ENCODE measurements at regions of chr14 and their contacts with region 1.

Region 1: DNA sequence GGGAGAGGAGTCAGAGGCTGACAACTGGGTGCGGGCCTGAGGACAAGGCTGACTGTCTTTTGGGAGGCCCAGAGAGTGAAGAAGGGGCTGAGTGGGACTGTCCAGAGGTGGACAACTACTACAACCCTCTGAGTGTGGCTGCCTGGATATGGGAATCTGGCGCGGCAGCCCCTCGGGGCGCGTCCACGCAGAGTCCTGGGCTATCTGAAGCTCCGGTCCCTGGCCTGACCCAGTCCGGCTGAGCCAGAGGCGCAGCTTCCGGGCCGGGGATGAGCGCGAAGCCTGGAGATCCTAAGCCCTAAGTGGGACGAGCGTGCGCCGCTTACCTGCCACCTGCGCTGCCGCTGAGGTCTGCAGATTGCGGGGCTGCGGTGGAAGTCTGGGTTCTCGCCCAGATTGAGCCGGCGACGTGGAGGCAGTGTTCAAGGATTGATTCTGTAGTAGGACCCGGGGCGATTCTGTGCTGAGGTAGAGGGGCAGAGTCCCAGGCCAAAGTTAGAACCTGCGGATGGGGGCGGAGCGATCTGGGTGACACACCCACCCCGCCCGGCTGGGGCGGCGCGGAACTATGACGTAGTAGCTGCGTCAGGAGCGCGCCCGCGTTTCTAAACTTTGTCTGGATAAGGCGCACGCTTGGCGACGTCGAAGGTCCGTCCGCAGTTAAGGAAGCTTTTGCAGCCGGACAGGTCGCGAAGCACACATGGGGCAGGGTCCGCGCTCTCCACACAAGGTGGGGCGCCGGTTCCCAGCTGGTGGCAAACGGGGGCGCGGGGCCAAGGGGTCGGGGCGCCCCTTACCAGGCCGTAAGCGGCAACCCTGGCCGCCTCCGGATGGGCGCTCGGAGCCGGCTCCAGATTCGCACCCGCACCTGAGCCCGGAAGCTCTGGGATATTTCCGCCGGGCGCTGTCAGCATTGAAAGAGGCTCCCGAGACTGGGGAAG is at the starts of genes DHRS1 and NOP9:
- DNase-seq: peak; percentile 90
- H3K4me3 ChIP-seq: peak within 1 kb of the TSS; percentile 80 to 95 (median 85)
- H3K27ac ChIP-seq: peak within 1 kb of the TSS; percentile 94
- H3K4me1 ChIP-seq: peaks cover 37% of the 10 kb centered on the region
- H3K27me3 ChIP-seq: no peaks in the 10 kb centered on the region
- CTCF ChIP-seq: no peak
- total RNA-seq, gene DHRS1: 19.2 to 84.8 TPM
- total RNA-seq, gene NOP9: 26.7 to 42.8 TPM

Region 2: GRCh38 chr14:24058260-24058950 is 241.1 kb before region 1 on chr14:
- CTCF ChIA-PET with region 1: no interaction called
- dilution Hi-C with region 1: no loop called
- in situ Hi-C with region 1: no loop called
- intact Hi-C with region 1: loop called (anchors 2 kb)
- DNase-seq: peak; percentile 50
- H3K4me3 ChIP-seq: no peak overlapping the region
- H3K27ac ChIP-seq: no peak overlapping the region
- H3K4me1 ChIP-seq: no peaks in the 10 kb centered on the region
- H3K27me3 ChIP-seq: peaks cover 7% of the 10 kb centered on the region
- CTCF ChIP-seq: peak; percentile 57 to 62

Region 3: GRCh38 chr14:24135834-24136542 is 163.5 kb before region 1 on chr14 and contains the start of gene PSME1:
- CTCF ChIA-PET with region 1: no interaction called
- dilution Hi-C with region 1: no loop called
- in situ Hi-C with region 1: no loop called
- intact Hi-C with region 1: loop called (anchors 1 kb)
- DNase-seq: peak; percentile 87
- H3K4me3 ChIP-seq: peak within 1 kb of the TSS; percentile 48 to 98 (median 79)
- H3K27ac ChIP-seq: peak within 1 kb of the TSS; percentile 59
- H3K4me1 ChIP-seq: peaks cover 34% of the 10 kb centered on the region
- H3K27me3 ChIP-seq: no peaks in the 10 kb centered on the region
- CTCF ChIP-seq: no peak
- total RNA-seq, gene PSME1: 35.8 to 85.1 TPM

Region 4: GRCh38 chr14:24188251-24189058 is 111.1 kb before region 1 on chr14 and contains the start of gene IPO4:
- CTCF ChIA-PET with region 1: no interaction called
- dilution Hi-C with region 1: loop called (anchors 5 kb)
- in situ Hi-C with region 1: no loop called
- intact Hi-C with region 1: loop called (anchors 1 kb)
- DNase-seq: peak; percentile 94
- H3K4me3 ChIP-seq: peak within 1 kb of the TSS; percentile 87 to 95 (median 89)
- H3K27ac ChIP-seq: peak within 1 kb of the TSS; percentile 63
- H3K4me1 ChIP-seq: peaks cover 14% of the 10 kb centered on the region
- H3K27me3 ChIP-seq: no peaks in the 10 kb centered on the region
- CTCF ChIP-seq: no peak
- total RNA-seq, gene IPO4: 44.2 to 60.2 TPM

Region 5: DNA sequence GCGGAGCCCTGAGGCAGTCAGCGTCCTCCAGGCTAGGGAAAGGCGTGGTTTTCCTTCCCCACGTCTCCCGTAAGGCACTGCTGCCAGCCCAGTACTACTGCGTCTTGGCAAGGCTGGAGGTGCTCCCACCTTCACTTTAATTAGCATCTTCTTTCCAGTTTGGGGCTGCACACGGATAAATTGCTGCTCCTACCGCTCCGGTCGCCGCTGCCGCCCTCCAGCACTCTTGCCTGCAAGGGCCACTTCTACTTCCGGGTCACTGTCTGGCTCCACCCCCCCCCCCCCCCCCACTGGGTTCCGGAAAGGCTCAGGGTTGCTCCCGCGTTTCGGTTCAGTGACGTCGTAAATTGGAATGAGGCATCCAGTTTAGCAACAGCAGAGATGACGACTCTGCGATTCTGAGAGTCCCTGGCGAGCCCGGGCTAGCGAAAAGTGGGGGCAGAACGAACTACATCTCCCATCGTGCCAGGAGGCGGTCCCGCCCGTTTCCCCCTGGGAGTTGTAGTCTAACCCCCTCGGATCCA is 67.3 kb before region 1 on chr14 and contains the start of gene NEDD8:
- CTCF ChIA-PET with region 1: no interaction called
- dilution Hi-C with region 1: loop called (anchors 5 kb)
- in situ Hi-C with region 1: no loop called
- intact Hi-C with region 1: no loop called
- DNase-seq: peak; percentile 99
- H3K4me3 ChIP-seq: peak within 1 kb of the TSS; percentile 52 to 67 (median 65)
- H3K27ac ChIP-seq: peak within 1 kb of the TSS; percentile 95
- H3K4me1 ChIP-seq: peaks cover 13% of the 10 kb centered on the region
- H3K27me3 ChIP-seq: no peaks in the 10 kb centered on the region
- CTCF ChIP-seq: no peak
- total RNA-seq, gene NEDD8: 66.2 to 274 TPM

Region 6: DNA sequence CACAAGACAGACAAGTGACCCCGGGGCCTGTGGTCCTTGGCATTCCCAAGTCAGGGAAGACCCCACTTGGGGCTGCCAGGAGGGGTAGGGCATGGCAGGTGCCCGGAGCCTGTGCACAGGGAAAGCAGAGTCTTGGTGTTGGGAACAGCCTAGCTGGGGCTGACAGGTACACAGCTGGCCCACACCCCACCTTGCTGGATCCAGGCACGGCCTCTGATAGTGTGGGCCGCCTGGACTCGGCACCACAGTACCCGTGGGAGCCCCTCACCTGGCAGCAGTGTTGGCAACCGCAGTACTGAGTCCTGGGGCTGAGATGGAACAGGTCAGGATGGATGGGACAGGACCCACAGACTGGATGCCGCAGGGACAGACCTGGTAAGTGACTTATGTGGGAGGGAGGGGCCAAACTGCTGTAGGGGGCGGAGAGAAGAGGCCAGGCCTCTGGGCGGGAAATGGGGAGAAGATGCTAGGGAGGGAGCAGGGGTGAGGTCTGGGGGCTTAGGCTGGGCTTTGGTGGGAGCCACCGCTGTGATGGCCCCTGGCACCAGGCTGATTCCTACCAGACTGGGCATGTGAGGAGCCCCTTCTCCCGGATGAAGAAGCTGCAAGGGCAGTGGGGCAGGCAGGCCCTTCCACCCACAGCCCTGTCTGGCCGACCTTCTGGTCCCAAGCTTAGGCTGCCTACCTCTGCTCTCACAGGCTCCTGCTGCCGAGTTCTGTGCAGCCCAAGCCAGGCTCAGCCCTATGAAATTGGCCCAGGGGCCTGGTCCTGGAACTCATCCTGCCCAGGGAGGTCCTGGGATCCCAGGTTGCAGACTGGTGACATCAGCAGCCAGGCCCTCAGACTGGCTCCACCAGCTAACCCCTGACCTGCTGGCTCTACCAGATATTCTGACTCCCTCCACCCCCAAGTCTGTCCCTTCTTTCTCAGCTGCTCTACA is 36.4 kb before region 1 on chr14 and contains the start of gene TGM1:
- CTCF ChIA-PET with region 1: no interaction called
- dilution Hi-C with region 1: loop called (anchors 5 kb)
- in situ Hi-C with region 1: no loop called
- intact Hi-C with region 1: loop called (anchors 5 kb)
- DNase-seq: no peak
- H3K4me3 ChIP-seq: no peak within 1 kb of the TSS
- H3K27ac ChIP-seq: no peak within 1 kb of the TSS
- H3K4me1 ChIP-seq: peaks cover 36% of the 10 kb centered on the region
- H3K27me3 ChIP-seq: no peaks in the 10 kb centered on the region
- CTCF ChIP-seq: no peak
- total RNA-seq, gene TGM1: 7.5 to 21.9 TPM

Region 7: GRCh38 chr14:24310646-24311604 is 11.4 kb after region 1 on chr14 and contains the start of gene LTB4R:
- CTCF ChIA-PET with region 1: interaction called, 6 read pairs
- dilution Hi-C with region 1: no loop called
- in situ Hi-C with region 1: no loop called
- intact Hi-C with region 1: loop called (anchors 2 kb)
- DNase-seq: peak; percentile 70
- H3K4me3 ChIP-seq: peak within 1 kb of the TSS in 2 of 3 experiments; percentile 33 to 35
- H3K27ac ChIP-seq: peak within 1 kb of the TSS; percentile 5
- H3K4me1 ChIP-seq: peaks cover 52% of the 10 kb centered on the region
- H3K27me3 ChIP-seq: no peaks in the 10 kb centered on the region
- CTCF ChIP-seq: peak in 1 of 2 donors; percentile 32
- total RNA-seq, gene LTB4R: 6.8 to 25.5 TPM

Measured in mammary epithelial cell (primary cell).